ENCODE measurements at regions of chr11 and their contacts with region 1.

Region 1: GRCh38 chr11:72144807-72145560 is 9.5 kb downstream of the FOLR3 start:
- DNase-seq: no peak
- CTCF ChIP-seq: no peak

Region 2: GRCh38 chr11:72015511-72016171 is 129.3 kb before region 1 on chr11:
- CTCF ChIA-PET with region 1: interaction called, 18 read pairs
- POLR2A ChIA-PET with region 1: no interaction called
- DNase-seq: no peak
- CTCF ChIP-seq: peak; percentile 71

Region 3: DNA sequence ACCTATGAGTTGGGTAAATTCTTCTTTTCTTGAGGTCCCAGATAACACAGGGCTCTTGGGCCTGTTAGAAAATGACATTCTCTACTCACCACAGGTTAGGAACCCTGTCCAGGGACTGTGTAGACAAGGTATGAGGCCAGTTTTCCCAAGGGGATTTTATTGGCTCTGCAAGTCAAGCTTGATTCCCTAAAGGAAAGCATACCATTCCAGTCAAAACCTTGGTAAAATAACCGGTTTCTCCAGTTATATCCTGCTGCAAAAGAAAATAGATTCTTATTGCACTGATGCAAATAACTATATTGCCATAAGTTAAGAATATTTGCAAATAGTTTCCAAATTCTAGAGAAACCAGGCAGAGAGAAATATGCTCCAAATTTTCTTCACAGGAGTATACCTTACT is 19.0 kb before region 1 on chr11:
- CTCF ChIA-PET with region 1: interaction called, 25 read pairs
- POLR2A ChIA-PET with region 1: no interaction called
- DNase-seq: no peak
- CTCF ChIP-seq: no peak

Region 4: GRCh38 chr11:72160319-72160718 is 15.3 kb after region 1 on chr11:
- CTCF ChIA-PET with region 1: interaction called, 36 read pairs
- POLR2A ChIA-PET with region 1: no interaction called
- DNase-seq: no peak
- CTCF ChIP-seq: no peak

Region 5: GRCh38 chr11:72189461-72190275 is 44.7 kb after region 1 on chr11:
- CTCF ChIA-PET with region 1: interaction called, 16 read pairs
- POLR2A ChIA-PET with region 1: no interaction called
- DNase-seq: no peak
- CTCF ChIP-seq: no peak